ENCODE measurements at regions of chr4 and their contacts with region 1.

Region 1: GRCh38 chr4:39353478-39354253 is 12.5 kb downstream of the RFC1 start:
- DNase-seq: peak; percentile 32
- H3K4me3 Mint-ChIP-seq: peak overlapping the region; percentile 80
- H3K27ac Mint-ChIP-seq: peak overlapping the region; percentile 96
- H3K4me1 Mint-ChIP-seq: peaks cover 63% of the 10 kb centered on the region
- H3K27me3 Mint-ChIP-seq: no peaks in the 10 kb centered on the region

Region 2: GRCh38 chr4:38319456-38320342 is 1034.0 kb before region 1 on chr4:
- intact Hi-C with region 1: loop called (anchors 10 kb)
- DNase-seq: peak; percentile 83
- H3K4me3 Mint-ChIP-seq: peak overlapping the region; percentile 48
- H3K27ac Mint-ChIP-seq: peak overlapping the region; percentile 79
- H3K4me1 Mint-ChIP-seq: peaks cover 55% of the 10 kb centered on the region
- H3K27me3 Mint-ChIP-seq: peaks cover 5% of the 10 kb centered on the region

Region 3: DNA sequence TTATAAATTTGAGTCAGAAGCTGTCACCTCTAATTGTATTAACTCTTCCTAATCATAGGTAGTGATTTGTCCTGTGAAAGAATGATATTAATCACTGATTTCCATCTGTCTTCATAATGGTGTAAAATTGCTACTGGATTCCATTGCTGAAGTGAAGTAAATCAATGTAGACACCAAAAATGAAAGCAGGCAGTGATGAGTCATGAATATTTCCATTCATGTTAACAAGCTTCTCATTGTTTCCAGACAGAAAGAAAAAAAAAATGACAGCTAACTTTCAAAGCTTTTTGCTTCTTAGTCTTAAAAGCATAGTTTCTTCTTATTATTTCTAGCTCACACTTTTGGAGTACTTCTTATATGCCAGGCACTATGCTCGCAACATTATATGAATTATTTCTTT is 464.5 kb before region 1 on chr4:
- intact Hi-C with region 1: loop called (anchors 2 kb)
- DNase-seq: no peak
- H3K4me3 Mint-ChIP-seq: peak overlapping the region; percentile 63
- H3K27ac Mint-ChIP-seq: peak overlapping the region; percentile 91
- H3K4me1 Mint-ChIP-seq: peaks cover 41% of the 10 kb centered on the region
- H3K27me3 Mint-ChIP-seq: no peaks in the 10 kb centered on the region

Region 4: GRCh38 chr4:38958453-38959190 is 395.0 kb before region 1 on chr4:
- intact Hi-C with region 1: loop called (anchors 5 kb)
- DNase-seq: no peak
- H3K4me3 Mint-ChIP-seq: peak overlapping the region; percentile 46
- H3K27ac Mint-ChIP-seq: peak overlapping the region; percentile 96
- H3K4me1 Mint-ChIP-seq: peaks cover 62% of the 10 kb centered on the region
- H3K27me3 Mint-ChIP-seq: no peaks in the 10 kb centered on the region

Region 5: DNA sequence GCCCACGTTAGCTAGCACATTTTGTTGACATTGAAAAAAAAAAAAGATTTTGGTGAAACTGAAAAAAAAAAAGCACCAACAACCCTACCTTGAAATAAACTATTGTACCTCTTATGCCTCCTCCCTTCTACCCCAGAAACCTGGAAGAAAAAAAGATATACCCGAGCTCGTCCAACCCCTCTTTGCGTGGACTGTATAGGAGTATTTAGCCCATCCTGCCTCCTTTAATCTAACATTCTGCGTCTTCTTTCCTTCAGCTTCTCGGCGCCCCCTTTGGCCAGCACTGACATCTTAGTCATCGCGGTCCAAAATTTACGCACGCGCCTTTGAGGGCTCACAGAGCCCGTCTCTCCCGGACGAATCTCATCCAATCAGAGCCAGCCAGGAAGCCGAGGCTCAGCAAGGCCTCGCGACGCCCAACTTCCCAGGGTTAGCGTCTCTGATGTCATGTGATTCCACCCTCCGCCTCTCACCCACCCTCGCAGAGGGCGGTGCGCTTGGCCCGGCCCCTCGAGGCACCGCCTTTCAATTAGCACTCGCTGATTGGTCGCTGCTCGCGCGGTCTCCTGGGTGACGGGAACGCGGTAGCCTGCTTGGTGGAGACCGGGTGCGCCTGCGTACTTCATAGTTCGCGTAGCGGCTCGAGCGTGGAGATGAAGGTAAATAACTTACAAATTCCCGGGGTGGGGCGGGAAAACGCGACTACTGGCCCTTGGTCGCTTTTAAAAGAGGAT is 171.6 kb before region 1 on chr4 and contains the start of gene WDR19:
- intact Hi-C with region 1: loop called (anchors 1 kb)
- DNase-seq: peak; percentile 98
- H3K4me3 Mint-ChIP-seq: no peak within 1 kb of the TSS
- H3K27ac Mint-ChIP-seq: no peak within 1 kb of the TSS
- H3K4me1 Mint-ChIP-seq: no peaks in the 10 kb centered on the region
- H3K27me3 Mint-ChIP-seq: peaks cover 15% of the 10 kb centered on the region
- total RNA-seq, gene WDR19: 12.6 and 13.7 TPM in 2 replicates

Region 6: GRCh38 chr4:39365830-39366771 is 12.4 kb after region 1 on chr4 and contains the start of gene RFC1:
- intact Hi-C with region 1: loop called (anchors 1 kb)
- DNase-seq: peak; percentile 89
- H3K4me3 Mint-ChIP-seq: peak within 1 kb of the TSS; percentile 95
- H3K27ac Mint-ChIP-seq: peak within 1 kb of the TSS; percentile 94
- H3K4me1 Mint-ChIP-seq: peaks cover 26% of the 10 kb centered on the region
- H3K27me3 Mint-ChIP-seq: no peaks in the 10 kb centered on the region
- total RNA-seq, gene RFC1: 83.3 and 87.1 TPM in 2 replicates

Region 7: DNA sequence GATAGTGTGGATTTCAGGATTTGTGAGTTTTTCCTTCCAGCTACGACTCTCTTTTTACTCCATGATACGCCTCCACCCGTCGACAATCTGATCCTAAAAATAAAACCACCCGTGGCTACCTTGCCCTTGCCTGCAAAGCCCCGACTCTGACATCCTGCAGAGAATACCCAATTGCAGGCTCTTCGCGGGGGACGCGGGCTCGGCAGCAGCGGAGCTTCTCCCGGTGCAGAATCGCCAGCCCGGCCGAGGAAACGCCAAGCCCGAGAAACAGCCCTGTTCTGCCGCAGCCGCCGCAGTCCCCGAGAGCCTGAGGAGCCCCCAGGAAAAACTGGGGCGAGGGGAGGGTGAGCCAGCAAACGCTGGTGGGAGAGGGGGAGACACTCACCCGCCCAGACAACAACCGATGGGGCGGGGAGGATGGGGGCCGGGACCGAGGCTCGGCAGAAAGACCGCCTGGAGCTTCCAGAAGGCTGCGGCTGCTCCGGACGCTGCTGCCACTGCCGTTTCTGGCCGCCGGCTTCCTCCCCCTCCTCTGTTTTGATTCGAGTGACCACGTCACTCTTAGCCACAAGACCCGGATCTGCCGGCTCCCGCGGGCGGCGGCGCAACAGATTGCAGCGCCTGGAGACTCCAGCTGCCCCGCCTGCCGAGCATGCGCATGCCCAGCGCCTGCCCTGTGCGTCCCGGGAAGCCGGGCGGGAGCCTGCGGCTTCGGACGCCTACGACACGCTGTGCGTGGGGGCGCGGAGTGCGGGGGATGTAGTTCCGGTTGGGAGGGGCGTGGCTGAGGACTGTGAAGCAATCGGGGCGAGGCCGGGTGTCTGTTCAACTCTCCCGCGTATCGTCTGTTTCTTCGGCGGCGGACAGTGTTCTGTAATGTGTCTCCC is 284.9 kb after region 1 on chr4 and contains the start of gene SMIM14:
- intact Hi-C with region 1: loop called (anchors 10 kb)
- DNase-seq: peak; percentile 89
- H3K4me3 Mint-ChIP-seq: peak within 1 kb of the TSS; percentile 87
- H3K27ac Mint-ChIP-seq: peak within 1 kb of the TSS; percentile 83
- H3K4me1 Mint-ChIP-seq: peaks cover 22% of the 10 kb centered on the region
- H3K27me3 Mint-ChIP-seq: peaks cover 24% of the 10 kb centered on the region
- total RNA-seq, gene SMIM14: 0.76 and 1.6 TPM in 2 replicates

Region 8: GRCh38 chr4:39977489-39978377 is 624.1 kb after region 1 on chr4 and contains the start of gene PDS5A:
- intact Hi-C with region 1: no loop called
- DNase-seq: peak; percentile 90
- H3K4me3 Mint-ChIP-seq: peak within 1 kb of the TSS; percentile 95
- H3K27ac Mint-ChIP-seq: peak within 1 kb of the TSS; percentile 94
- H3K4me1 Mint-ChIP-seq: peaks cover 33% of the 10 kb centered on the region
- H3K27me3 Mint-ChIP-seq: no peaks in the 10 kb centered on the region
- total RNA-seq, gene PDS5A: 129 and 131 TPM in 2 replicates

Measured in activated T-helper 1 cell treated with anti-CD3 and anti-CD28 coated beads, Interleukin-12 subunit alpha, Interleukin-12 subunit beta, Interleukin-2, Interleukin-4 antibody, amounts not matched to agents 30 ng/mL and 10 ng/mL and 1 ng/mL, durations not matched to agents 14 hours and 24 hours and 36 hours (primary cell).